ENCODE measurements at regions of chr13 and their contacts with region 1.

Region 1: DNA sequence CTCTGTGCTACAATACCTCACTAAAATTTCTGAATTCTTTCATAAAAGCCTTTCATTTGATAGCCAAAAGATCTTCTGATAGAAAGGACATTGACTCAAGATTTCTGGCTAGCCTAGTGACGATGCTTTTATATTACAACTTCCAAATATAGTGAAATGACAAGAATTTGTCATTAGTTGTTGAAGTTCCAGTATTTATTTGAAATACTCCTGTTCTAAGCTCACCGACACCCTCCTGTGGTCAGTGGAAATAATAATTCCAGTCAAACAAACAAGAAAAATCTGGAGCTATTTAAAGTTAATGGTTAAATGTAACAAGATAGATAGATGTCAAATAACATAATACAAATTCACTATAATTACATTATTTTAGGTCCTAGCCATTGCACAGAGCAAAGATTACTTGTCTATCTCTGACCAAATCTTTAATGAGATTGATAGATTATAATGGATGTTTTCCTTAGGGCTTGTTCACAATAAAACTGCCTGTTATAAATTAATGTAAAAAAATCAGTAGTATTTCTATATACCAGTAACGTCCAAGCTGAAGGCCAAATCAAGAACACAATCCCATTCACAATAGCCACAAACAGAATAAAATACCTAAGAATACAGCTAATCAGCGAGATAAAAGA is 195.5 kb downstream of the RGCC start:
- DNase-seq: peak; percentile 66
- H3K4me3 Mint-ChIP-seq: no peak overlapping the region
- H3K27ac Mint-ChIP-seq: no peak overlapping the region
- H3K4me1 Mint-ChIP-seq: peaks cover 22% of the 10 kb centered on the region
- H3K27me3 Mint-ChIP-seq: no peaks in the 10 kb centered on the region

Region 2: DNA sequence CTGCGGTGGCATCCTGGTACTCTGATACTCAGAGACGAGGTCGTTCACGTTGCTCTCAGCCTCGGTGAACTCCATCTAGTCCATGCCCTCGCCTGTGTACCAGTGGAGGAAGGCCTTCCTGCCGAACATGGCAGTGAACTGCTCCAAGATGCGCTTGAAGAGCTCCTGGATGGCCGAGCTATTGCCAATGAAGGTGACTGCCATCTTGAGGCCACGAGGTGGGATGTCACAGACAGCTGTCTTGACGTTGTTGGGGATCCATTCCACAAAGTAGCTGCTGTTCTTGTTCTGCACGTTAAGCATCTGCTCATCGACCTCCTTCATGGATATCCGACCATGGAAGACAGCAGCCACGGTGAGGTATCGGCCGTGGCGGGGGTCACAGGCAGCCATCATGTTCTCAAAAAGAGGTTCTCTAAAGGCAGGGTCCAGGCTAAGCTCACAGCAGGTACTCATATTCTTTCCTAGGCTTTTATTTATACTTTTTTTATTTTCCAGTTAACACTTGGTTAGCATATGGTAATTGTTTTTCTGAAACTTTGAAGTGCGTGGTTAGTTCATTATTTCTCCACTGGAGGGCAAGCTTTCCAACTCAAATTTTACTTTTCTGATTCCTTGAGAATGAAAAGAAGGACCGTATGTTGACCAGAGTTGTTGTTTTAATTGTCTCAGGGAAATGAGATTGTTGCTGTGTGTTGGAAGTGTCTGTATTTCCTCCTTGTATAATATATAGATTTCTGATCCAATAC is 267.9 kb before region 1 on chr13:
- CTCF ChIA-PET with region 1: interaction called, 4 read pairs
- intact Hi-C with region 1: loop called (anchors 1 kb)
- DNase-seq: no peak
- H3K4me3 Mint-ChIP-seq: no peak overlapping the region
- H3K27ac Mint-ChIP-seq: no peak overlapping the region
- H3K4me1 Mint-ChIP-seq: peaks cover 24% of the 10 kb centered on the region
- H3K27me3 Mint-ChIP-seq: no peaks in the 10 kb centered on the region

Region 3: GRCh38 chr13:41411522-41411921 is 241.3 kb before region 1 on chr13:
- CTCF ChIA-PET with region 1: interaction called, 9 read pairs
- intact Hi-C with region 1: loop called (anchors 1 kb)
- DNase-seq: peak; percentile 56
- H3K4me3 Mint-ChIP-seq: no peak overlapping the region
- H3K27ac Mint-ChIP-seq: no peak overlapping the region
- H3K4me1 Mint-ChIP-seq: peaks cover 2% of the 10 kb centered on the region
- H3K27me3 Mint-ChIP-seq: no peaks in the 10 kb centered on the region

Region 4: GRCh38 chr13:41428155-41428554 is 224.7 kb before region 1 on chr13:
- CTCF ChIA-PET with region 1: no interaction called
- intact Hi-C with region 1: loop called (anchors 1 kb)
- DNase-seq: peak; percentile 35
- H3K4me3 Mint-ChIP-seq: no peak overlapping the region
- H3K27ac Mint-ChIP-seq: no peak overlapping the region
- H3K4me1 Mint-ChIP-seq: peaks cover 6% of the 10 kb centered on the region
- H3K27me3 Mint-ChIP-seq: no peaks in the 10 kb centered on the region